Calu3 (cell line): ENCODE measurements at regions of chr18 and their contacts with region 1.

Region 1: GRCh38 chr18:785242-785641 is 26.8 kb downstream of the YES1 start:
- DNase-seq: no peak
- H3K4me3 Mint-ChIP-seq: no peak overlapping the region
- H3K27ac Mint-ChIP-seq: no peak overlapping the region
- H3K4me1 Mint-ChIP-seq: peaks cover 15% of the 10 kb centered on the region
- H3K27me3 Mint-ChIP-seq: no peaks in the 10 kb centered on the region
- CTCF ChIP-seq: no peak

Region 2: DNA sequence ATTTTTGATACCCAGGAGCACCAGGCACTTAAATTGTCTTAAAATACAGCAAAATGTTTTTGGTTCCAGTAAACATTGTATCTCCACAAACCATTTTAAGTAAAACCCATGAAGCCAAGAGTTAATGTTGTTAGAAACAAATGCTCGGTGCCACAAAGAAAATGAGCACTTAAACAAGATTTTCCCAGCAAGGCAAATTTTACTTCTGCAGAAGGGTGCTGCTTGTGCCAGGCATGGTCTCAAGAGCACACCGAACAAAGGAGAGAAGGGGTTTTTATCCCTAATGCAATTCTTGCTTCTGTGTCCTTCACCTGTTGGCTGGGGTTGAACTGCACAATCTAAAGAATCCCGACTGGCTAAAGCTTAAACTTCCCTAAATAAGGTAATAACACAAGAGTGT is 406.1 kb after region 1 on chr18:
- CTCF ChIA-PET with region 1: interaction called, 10 read pairs
- intact Hi-C with region 1: no loop called
- DNase-seq: no peak
- H3K4me3 Mint-ChIP-seq: no peak overlapping the region
- H3K27ac Mint-ChIP-seq: no peak overlapping the region
- H3K4me1 Mint-ChIP-seq: no peaks in the 10 kb centered on the region
- H3K27me3 Mint-ChIP-seq: no peaks in the 10 kb centered on the region
- CTCF ChIP-seq: no peak